ENCODE measurements at regions of chr13 and their contacts with region 1.

Region 1: GRCh38 chr13:98653463-98653985 is 76.6 kb upstream of the STK24 start:
- DNase-seq: peak; percentile 75
- H3K4me3 Mint-ChIP-seq: no peak overlapping the region
- H3K27ac Mint-ChIP-seq: no peak overlapping the region
- H3K4me1 Mint-ChIP-seq: peaks cover 4% of the 10 kb centered on the region
- H3K27me3 Mint-ChIP-seq: peaks cover 2% of the 10 kb centered on the region

Region 2: GRCh38 chr13:98454389-98454881 is 199.1 kb before region 1 on chr13:
- CTCF ChIA-PET with region 1: interaction called, 14 read pairs
- POLR2A ChIA-PET with region 1: no interaction called
- DNase-seq: no peak
- H3K4me3 Mint-ChIP-seq: no peak overlapping the region
- H3K27ac Mint-ChIP-seq: peak overlapping the region; percentile 26
- H3K4me1 Mint-ChIP-seq: peaks cover 18% of the 10 kb centered on the region
- H3K27me3 Mint-ChIP-seq: no peaks in the 10 kb centered on the region

Region 3: DNA sequence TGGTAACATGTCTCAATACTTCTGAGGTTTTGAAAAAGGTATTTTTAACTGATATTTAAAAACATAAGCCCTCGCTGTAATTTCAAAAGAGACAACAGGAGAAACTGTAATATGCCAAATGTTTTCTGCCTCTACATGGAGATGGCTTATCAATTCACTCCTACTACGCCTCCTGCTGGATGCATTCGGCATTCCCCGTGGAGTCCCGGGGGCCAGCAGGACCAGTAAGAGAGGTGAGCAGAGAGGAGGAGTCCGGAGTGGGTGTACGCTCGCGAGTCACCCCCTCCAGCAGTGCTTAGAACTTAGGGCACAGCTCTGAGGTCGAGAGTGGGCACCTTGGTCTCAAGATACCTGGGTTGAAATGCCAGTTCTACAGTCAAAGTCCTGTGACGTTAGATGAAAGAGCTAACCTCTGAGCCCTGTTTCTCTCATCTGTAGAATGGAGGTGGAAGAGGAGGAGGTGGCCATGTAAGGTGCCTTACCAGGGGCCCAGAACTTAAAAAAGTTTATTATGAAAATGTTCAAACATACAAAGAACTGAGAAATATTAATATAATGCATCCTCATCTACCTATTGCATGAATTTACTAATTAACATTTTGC is 186.8 kb before region 1 on chr13:
- CTCF ChIA-PET with region 1: interaction called, 13 read pairs
- POLR2A ChIA-PET with region 1: no interaction called
- DNase-seq: peak; percentile 42
- H3K4me3 Mint-ChIP-seq: no peak overlapping the region
- H3K27ac Mint-ChIP-seq: no peak overlapping the region
- H3K4me1 Mint-ChIP-seq: peaks cover 16% of the 10 kb centered on the region
- H3K27me3 Mint-ChIP-seq: no peaks in the 10 kb centered on the region

Region 4: DNA sequence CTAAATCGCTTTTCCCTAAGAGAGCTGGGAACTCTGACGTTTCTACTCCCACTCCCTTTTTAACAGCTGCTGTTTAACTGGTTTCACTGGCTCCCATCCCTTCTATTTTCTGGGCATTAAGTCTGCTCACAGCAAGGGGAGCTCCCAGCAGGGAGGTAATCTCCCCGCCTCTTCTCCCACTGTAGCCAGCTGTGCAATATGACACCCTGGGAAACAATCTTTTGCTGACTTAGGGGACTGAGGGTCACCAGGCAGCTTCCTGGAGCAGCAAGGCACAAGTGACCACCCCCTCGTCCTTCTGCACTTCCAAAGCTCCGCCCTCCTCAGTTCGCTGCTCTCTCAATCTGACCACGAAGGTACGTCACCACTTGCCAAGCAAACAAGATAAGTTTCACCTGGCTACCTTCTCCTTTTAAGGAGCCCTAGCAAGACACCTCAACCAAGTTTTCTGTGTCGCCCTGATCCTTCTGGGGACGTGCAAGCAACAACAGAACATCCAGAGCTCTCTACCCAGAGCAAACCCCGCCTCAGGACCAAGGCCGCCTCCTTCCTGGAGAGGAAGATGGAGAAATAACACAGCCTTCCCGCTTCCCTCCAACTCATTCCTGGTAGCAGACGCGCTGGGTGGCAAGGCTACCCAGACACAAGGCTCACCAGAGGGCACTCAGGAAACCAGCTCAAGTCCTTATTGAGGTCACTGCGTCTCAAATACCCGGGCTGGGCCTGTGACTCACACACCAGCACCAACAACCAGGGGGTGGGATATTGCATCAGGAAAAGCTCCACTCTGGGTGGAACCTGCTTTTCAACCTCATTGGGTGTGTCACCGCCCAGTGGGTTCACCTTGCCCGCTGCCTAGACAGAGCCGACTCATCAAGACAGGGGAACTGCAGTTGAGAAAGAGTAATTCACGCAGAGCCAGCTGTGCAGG is 169.0 kb before region 1 on chr13:
- CTCF ChIA-PET with region 1: interaction called, 18 read pairs
- POLR2A ChIA-PET with region 1: interaction called, 3 read pairs
- DNase-seq: peak; percentile 83
- H3K4me3 Mint-ChIP-seq: peak overlapping the region; percentile 51
- H3K27ac Mint-ChIP-seq: peak overlapping the region; percentile 90
- H3K4me1 Mint-ChIP-seq: peaks cover 90% of the 10 kb centered on the region
- H3K27me3 Mint-ChIP-seq: no peaks in the 10 kb centered on the region

Region 5: GRCh38 chr13:98609756-98610155 is 43.8 kb before region 1 on chr13:
- CTCF ChIA-PET with region 1: no interaction called
- POLR2A ChIA-PET with region 1: no interaction called
- DNase-seq: no peak
- H3K4me3 Mint-ChIP-seq: no peak overlapping the region
- H3K27ac Mint-ChIP-seq: no peak overlapping the region
- H3K4me1 Mint-ChIP-seq: no peaks in the 10 kb centered on the region
- H3K27me3 Mint-ChIP-seq: peaks cover 12% of the 10 kb centered on the region

Region 6: GRCh38 chr13:98672944-98673545 is 19.5 kb after region 1 on chr13:
- CTCF ChIA-PET with region 1: interaction called, 11 read pairs
- POLR2A ChIA-PET with region 1: no interaction called
- DNase-seq: peak; percentile 55
- H3K4me3 Mint-ChIP-seq: no peak overlapping the region
- H3K27ac Mint-ChIP-seq: no peak overlapping the region
- H3K4me1 Mint-ChIP-seq: peaks cover 3% of the 10 kb centered on the region
- H3K27me3 Mint-ChIP-seq: peaks cover 5% of the 10 kb centered on the region